ENCODE measurements at regions of chr7 and their contacts with region 1.

Region 1: DNA sequence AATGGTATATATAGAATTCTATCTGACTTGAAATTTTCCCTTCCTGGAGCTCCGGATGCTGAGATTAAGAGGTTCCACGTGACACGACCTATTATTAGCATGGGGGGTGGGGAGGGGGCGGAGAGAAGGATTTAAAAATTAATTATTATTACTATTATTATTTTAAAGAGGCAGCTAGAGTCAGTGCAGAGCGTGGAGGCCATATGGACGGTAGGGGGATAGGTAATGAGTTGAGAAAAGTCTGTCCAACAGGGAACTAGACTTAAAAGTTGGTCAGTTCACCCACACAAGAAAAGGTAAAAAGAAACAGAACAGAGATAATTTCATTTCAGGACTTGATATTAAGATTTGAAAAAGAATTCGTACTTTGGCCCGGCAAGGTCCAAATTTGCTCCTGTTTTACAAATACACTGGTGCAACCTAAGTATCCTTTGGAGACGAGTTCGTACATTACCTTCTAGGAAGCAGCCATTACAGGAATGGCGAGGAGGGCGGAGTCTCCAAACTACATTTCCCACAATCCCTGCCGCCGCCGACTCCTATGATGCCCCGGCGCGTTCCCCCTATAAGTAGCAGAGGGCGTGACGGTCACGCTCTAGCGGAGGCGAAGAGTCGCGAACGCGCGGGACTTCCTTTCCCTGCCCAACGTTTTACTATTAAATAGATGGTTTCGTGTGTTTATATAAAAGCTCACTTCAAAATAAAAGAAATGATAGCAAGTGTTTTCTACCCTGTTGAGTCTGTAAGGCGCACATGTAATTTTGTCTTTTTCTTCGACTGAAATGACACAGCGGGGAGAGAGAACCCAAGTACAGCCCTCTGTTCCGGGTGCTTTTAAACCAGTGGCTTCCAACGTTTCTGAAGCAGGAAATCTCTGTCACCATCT is at the start of gene SMIM30:
- DNase-seq: peak; percentile 92
- H3K4me3 Mint-ChIP-seq: peak within 1 kb of the TSS; percentile 85
- H3K27ac Mint-ChIP-seq: peak within 1 kb of the TSS; percentile 79
- H3K4me1 Mint-ChIP-seq: peaks cover 28% of the 10 kb centered on the region
- H3K27me3 Mint-ChIP-seq: no peaks in the 10 kb centered on the region
- total RNA-seq, gene SMIM30: 40.1 to 41.2 TPM

Region 2: GRCh38 chr7:111561885-111562732 is 1556.2 kb before region 1 on chr7 and contains the start of gene IMMP2L:
- CTCF ChIA-PET with region 1: no interaction called
- intact Hi-C with region 1: loop called (anchors 5 kb)
- DNase-seq: peak; percentile 89
- H3K4me3 Mint-ChIP-seq: peak within 1 kb of the TSS; percentile 89
- H3K27ac Mint-ChIP-seq: peak within 1 kb of the TSS; percentile 85
- H3K4me1 Mint-ChIP-seq: peaks cover 32% of the 10 kb centered on the region
- H3K27me3 Mint-ChIP-seq: no peaks in the 10 kb centered on the region
- total RNA-seq, gene IMMP2L: 24.4 to 26.6 TPM

Region 3: GRCh38 chr7:112206238-112207044 is 911.9 kb before region 1 on chr7 and contains the starts of genes DOCK4 and ZNF277:
- CTCF ChIA-PET with region 1: no interaction called
- intact Hi-C with region 1: loop called (anchors 1 kb)
- DNase-seq: peak; percentile 99
- H3K4me3 Mint-ChIP-seq: peak within 1 kb of the TSS; percentile 97
- H3K27ac Mint-ChIP-seq: peak within 1 kb of the TSS; percentile 71
- H3K4me1 Mint-ChIP-seq: peaks cover 35% of the 10 kb centered on the region
- H3K27me3 Mint-ChIP-seq: peaks cover 28% of the 10 kb centered on the region
- total RNA-seq, gene DOCK4: 0.43 to 0.62 TPM
- total RNA-seq, gene ZNF277: 27.0 to 28.2 TPM

Region 4: GRCh38 chr7:112398534-112398933 is 719.8 kb before region 1 on chr7:
- CTCF ChIA-PET with region 1: no interaction called
- intact Hi-C with region 1: loop called (anchors 2 kb)
- DNase-seq: no peak
- H3K4me3 Mint-ChIP-seq: no peak overlapping the region
- H3K27ac Mint-ChIP-seq: no peak overlapping the region
- H3K4me1 Mint-ChIP-seq: peaks cover 13% of the 10 kb centered on the region
- H3K27me3 Mint-ChIP-seq: peaks cover 7% of the 10 kb centered on the region

Region 5: DNA sequence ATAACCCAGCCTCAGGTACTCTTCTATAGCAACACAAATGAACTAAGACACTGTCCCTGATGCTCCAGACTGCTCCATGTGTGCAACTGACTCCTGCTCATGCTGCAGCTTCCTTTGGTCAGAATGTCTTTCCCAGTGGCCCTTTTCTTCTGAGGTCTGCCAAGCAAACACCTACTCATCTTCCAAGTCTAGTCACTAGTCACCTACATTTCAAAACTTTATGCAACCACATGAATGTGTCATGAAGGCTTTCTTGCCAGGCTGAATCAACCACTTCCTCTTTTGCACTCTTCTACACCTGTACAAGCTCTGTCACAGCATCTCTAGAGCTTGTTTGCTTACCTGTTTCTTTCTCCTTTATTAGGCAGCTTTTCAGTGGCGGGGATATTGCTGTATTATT is 561.7 kb before region 1 on chr7:
- CTCF ChIA-PET with region 1: no interaction called
- intact Hi-C with region 1: loop called (anchors 5 kb)
- DNase-seq: peak; percentile 43
- H3K4me3 Mint-ChIP-seq: no peak overlapping the region
- H3K27ac Mint-ChIP-seq: no peak overlapping the region
- H3K4me1 Mint-ChIP-seq: peaks cover 14% of the 10 kb centered on the region
- H3K27me3 Mint-ChIP-seq: no peaks in the 10 kb centered on the region

Region 6: GRCh38 chr7:112782494-112782893 is 335.8 kb before region 1 on chr7:
- CTCF ChIA-PET with region 1: no interaction called
- intact Hi-C with region 1: loop called (anchors 2 kb)
- DNase-seq: peak; percentile 66
- H3K4me3 Mint-ChIP-seq: peak overlapping the region; percentile 23
- H3K27ac Mint-ChIP-seq: peak overlapping the region; percentile 27
- H3K4me1 Mint-ChIP-seq: peaks cover 29% of the 10 kb centered on the region
- H3K27me3 Mint-ChIP-seq: no peaks in the 10 kb centered on the region